PC-9 (cell line): ENCODE measurements at regions of chrX and their contacts with region 1.

Region 1: DNA sequence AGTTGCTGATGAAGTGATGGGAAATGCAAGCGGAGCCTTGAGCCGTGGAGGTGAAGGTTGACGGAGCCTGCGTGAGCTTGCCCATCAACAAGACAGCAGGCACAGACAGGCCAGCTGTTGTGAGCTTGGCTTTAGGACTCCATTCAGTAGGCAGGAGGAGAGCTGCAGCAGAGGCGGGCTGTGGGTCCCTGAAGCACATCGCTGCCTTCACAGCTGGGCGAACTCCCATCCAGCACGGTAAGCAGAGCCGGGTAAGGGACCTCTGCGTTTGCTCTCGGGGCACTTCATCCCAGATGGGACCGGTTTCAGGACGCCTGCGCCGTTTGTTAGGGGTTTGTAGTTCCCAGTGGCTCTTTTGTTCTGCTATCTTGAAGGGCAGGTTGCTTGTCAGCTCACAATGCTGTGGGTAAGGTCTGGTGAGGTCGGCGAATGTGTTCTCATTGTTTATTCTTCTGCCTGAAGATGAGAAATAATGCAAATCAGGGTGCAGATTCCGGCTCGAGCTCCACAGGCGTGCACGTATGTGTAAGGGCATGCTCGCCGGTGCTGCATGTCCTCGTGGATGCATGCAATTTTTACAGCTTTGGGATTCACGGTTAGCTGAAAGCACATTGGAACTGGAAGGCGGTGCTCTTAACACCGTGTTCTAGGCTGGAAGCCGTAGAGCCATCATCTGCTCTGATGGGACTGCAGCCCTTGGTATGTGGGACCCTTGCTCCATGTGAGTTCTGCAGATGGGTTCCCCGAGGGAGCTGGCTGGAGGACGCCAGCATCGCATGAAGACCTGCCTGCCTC is 54.6 kb upstream of the CLDN34 start:
- DNase-seq: no peak
- H3K4me3 ChIP-seq: peak overlapping the region; percentile 35; the same call in 1 of the 2 replicates
- H3K27ac ChIP-seq: peak overlapping the region; percentile 92
- H3K4me1 ChIP-seq: peaks cover 58% of the 10 kb centered on the region
- H3K27me3 ChIP-seq: no peaks in the 10 kb centered on the region
- CTCF ChIP-seq: no peak

Region 2: GRCh38 chrX:9940421-9940820 is 27.9 kb after region 1 on chrX:
- CTCF ChIA-PET with region 1: no interaction called
- POLR2A ChIA-PET with region 1: interaction called, 12 read pairs
- intact Hi-C with region 1: loop called (anchors 1 kb)
- DNase-seq: peak; percentile 57 to 64
- H3K4me3 ChIP-seq: no peak overlapping the region
- H3K27ac ChIP-seq: no peak overlapping the region
- H3K4me1 ChIP-seq: peaks cover 11% of the 10 kb centered on the region; the same call in 1 of the 2 replicates
- H3K27me3 ChIP-seq: no peaks in the 10 kb centered on the region
- CTCF ChIP-seq: no peak

Region 3: DNA sequence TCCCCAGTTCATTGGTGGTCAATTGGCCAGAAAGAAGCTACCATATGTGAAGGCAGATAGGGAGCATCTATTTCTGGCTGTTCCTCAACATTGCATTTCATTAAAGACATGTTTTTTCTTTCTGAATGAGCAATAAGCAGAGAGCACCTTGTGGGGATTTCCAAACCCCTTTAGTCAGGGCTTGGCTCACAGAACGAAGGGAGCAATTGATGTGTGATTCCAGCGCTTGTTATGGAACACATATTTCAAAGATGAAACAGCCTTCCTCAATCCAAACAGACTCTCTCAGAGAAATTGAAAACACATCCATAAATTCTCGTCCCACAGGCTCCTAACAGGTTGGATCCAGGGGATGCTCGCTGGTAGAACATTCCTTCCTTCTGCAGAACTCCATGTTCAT is 328.4 kb after region 1 on chrX:
- CTCF ChIA-PET with region 1: no interaction called
- POLR2A ChIA-PET with region 1: no interaction called
- intact Hi-C with region 1: no loop called
- DNase-seq: no peak
- H3K4me3 ChIP-seq: no peak overlapping the region
- H3K27ac ChIP-seq: no peak overlapping the region
- H3K4me1 ChIP-seq: peaks cover 10% of the 10 kb centered on the region
- H3K27me3 ChIP-seq: no peaks in the 10 kb centered on the region
- CTCF ChIP-seq: no peak